B cell (primary cell): ENCODE measurements at regions of chr12 and their contacts with region 1.

Region 1: DNA sequence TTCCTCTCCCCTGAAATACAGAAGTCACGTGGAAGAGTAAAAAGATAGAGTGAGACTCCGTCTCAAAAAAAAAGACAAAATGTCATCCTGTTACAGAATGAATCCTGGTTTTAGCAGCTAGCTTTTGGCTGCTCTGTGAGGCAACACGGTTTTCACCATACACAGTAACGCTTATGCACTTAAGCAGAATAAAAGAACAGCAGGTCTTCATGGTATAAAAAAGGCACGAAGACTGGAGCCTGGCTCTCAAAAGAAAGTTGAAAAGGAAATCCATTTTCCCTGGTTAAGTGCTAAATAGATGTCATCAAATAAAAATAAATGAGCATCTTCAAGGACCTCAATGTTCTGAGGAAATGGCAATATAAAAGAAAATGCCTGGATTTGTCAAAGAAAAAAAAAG is 444.1 kb downstream of the IPO8 start:
- DNase-seq: no peak
- ATAC-seq: no peak
- H3K4me3 ChIP-seq: no peak overlapping the region
- H3K4me3 Mint-ChIP-seq: no peak overlapping the region
- H3K27ac ChIP-seq: no peak overlapping the region
- H3K27ac Mint-ChIP-seq: no peak overlapping the region
- H3K4me1 ChIP-seq: no peaks in the 10 kb centered on the region
- H3K4me1 Mint-ChIP-seq: no peaks in the 10 kb centered on the region
- H3K27me3 ChIP-seq: no peaks in the 10 kb centered on the region
- H3K27me3 Mint-ChIP-seq: no peaks in the 10 kb centered on the region
- CTCF ChIP-seq: no peak

Region 2: GRCh38 chr12:30345744-30346471 is 94.4 kb after region 1 on chr12:
- CTCF ChIA-PET with region 1: no interaction called
- POLR2A ChIA-PET with region 1: no interaction called
- intact Hi-C with region 1: loop called (anchors 2 kb)
- DNase-seq: no peak
- ATAC-seq: no peak
- H3K4me3 ChIP-seq: no peak overlapping the region
- H3K4me3 Mint-ChIP-seq: no peak overlapping the region
- H3K27ac ChIP-seq: no peak overlapping the region
- H3K27ac Mint-ChIP-seq: no peak overlapping the region
- H3K4me1 ChIP-seq: no peaks in the 10 kb centered on the region
- H3K4me1 Mint-ChIP-seq: no peaks in the 10 kb centered on the region
- H3K27me3 ChIP-seq: no peaks in the 10 kb centered on the region
- H3K27me3 Mint-ChIP-seq: no peaks in the 10 kb centered on the region
- CTCF ChIP-seq: no peak